ENCODE measurements at regions of chr15 and their contacts with region 1.

Region 1: GRCh38 chr15:95734422-95735316 is 595.8 kb upstream of the NR2F2 start:
- DNase-seq: no peak
- ATAC-seq: no peak
- H3K4me3 ChIP-seq: no peak overlapping the region
- H3K27ac ChIP-seq: no peak overlapping the region
- H3K4me1 ChIP-seq: no peaks in the 10 kb centered on the region
- H3K27me3 ChIP-seq: no peaks in the 10 kb centered on the region
- CTCF ChIP-seq: no peak
- POLR2A ChIP-seq: no peak

Region 2: DNA sequence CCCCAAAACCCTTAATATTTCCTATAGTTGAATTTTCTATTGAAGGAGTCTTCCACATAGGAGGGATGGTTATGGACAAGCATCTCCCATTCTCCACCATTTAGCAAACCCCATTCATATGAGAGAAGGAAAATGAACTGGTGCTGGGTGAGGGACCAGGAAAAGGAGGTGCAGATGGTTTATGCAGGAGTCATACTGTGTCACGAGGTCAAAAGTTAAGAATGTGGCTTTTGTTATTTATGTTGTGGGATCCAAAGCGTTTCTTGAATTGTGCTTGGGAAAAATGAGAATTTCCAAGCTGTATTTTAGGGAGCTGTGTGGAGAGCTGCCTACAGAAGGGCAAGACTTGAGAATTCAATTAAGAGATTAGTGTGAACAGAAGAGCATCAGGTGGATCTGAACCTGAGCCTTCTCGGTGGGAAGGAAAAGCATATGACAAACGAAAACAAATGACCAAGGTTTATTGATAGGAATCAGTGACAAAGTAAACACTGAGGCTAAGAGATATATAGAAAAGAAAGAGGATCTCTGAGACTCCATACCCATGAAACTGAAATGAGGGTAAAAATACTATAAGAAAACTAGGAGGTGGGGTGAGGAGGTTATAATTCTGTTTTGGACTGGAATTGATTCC is 122.6 kb after region 1 on chr15:
- in situ Hi-C with region 1: no loop called
- intact Hi-C with region 1: no loop called
- DNase-seq: no peak
- ATAC-seq: no peak
- H3K4me3 ChIP-seq: no peak overlapping the region
- H3K27ac ChIP-seq: peak overlapping the region; percentile 41 to 64 (median 60)
- H3K4me1 ChIP-seq: peaks cover 4 to 8% of the 10 kb centered on the region in 2 donors
- H3K27me3 ChIP-seq: no peaks in the 10 kb centered on the region
- CTCF ChIP-seq: no peak
- POLR2A ChIP-seq: no peak

Region 3: GRCh38 chr15:95929232-95929846 is 194.7 kb after region 1 on chr15:
- in situ Hi-C with region 1: no loop called
- intact Hi-C with region 1: loop called (anchors 5 kb)
- DNase-seq: no peak
- ATAC-seq: no peak
- H3K4me3 ChIP-seq: no peak overlapping the region
- H3K27ac ChIP-seq: no peak overlapping the region
- H3K4me1 ChIP-seq: no peaks in the 10 kb centered on the region
- H3K27me3 ChIP-seq: no peaks in the 10 kb centered on the region
- CTCF ChIP-seq: no peak
- POLR2A ChIP-seq: no peak

Measured in gastrocnemius medialis (tissue), 4 donors.